Right ventricle myocardium inferior (tissue), 1 donor: ENCODE measurements at regions of chr14 and their contacts with region 1.

Region 1: GRCh38 chr14:58107947-58108552 is 44.0 kb downstream of the ARMH4 start:
- DNase-seq: no peak
- ATAC-seq: no peak

Region 2: GRCh38 chr14:58131386-58131785 is 23.3 kb after region 1 on chr14:
- intact Hi-C with region 1: no loop called
- DNase-seq: no peak
- ATAC-seq: no peak

Region 3: GRCh38 chr14:58166005-58166983 is 58.2 kb after region 1 on chr14:
- intact Hi-C with region 1: loop called (anchors 2 kb)
- DNase-seq: peak; percentile 91
- ATAC-seq: peak; percentile 76

Region 4: GRCh38 chr14:58362798-58363412 is 254.9 kb after region 1 on chr14:
- intact Hi-C with region 1: loop called (anchors 5 kb)
- DNase-seq: no peak
- ATAC-seq: no peak